ENCODE measurements at regions of chr11 and their contacts with region 1.

Region 1: DNA sequence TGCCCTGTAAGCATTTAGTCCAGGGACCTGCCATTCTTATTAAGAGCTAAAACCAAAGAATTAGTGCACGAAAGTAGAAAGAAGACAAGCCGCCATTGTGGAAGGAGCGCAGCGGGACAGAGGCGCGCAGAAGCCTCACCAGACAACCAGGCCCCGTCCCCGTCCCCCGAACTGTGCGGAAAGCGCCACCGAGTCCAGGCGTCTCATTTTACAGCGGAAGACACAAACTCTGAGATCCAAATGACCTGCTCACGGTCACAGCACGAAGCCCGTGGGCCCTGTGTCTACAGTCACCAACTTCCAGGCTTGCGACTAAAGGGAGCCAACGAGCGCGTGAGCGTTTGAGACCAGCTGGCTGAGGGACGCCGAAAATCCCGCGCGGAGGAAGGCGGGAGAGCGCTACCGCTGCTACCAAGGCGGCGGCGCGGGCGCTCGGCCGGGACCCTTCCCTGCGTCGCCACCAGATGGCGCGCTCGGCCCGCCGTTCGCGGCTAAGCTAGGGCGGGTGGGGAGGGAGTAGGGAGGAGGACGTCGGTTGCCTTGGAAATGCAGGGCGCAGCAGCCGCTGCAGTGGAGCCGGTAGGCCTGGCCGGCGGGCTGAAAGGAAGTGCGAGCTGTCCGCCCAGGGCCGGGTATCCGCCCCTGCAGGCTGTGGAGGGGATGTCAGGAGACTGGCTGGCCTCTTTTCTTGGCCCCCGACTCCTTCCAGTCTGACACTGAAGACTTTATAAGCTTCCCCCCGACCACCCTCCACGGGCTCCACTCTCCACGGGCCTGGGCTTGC is 434 bp upstream of the CCDC83 start:
- DNase-seq: peak; percentile 84 to 93 (median 88)
- H3K4me3 ChIP-seq: peak overlapping the region; percentile 81 to 95
- H3K4me3 Mint-ChIP-seq: peak overlapping the region; percentile 86 to 94 (median 91)
- H3K27ac ChIP-seq: peak overlapping the region; percentile 73
- H3K27ac Mint-ChIP-seq: peak overlapping the region; percentile 91 to 96 (median 94)
- H3K4me1 ChIP-seq: peaks cover 16% of the 10 kb centered on the region
- H3K4me1 Mint-ChIP-seq: peaks cover 6 to 16% (median 11%) of the 10 kb centered on the region in 4 donors
- H3K27me3 ChIP-seq: no peaks in the 10 kb centered on the region
- H3K27me3 Mint-ChIP-seq: peaks cover 0 to 2% of the 10 kb centered on the region in 2 donors

Region 2: GRCh38 chr11:85694386-85694980 is 160.3 kb before region 1 on chr11:
- CTCF ChIA-PET with region 1: interaction called, 29 read pairs
- POLR2A ChIA-PET with region 1: interaction called, 5 read pairs
- intact Hi-C with region 1: loop called (anchors 1 kb)
- DNase-seq: peak in 4 of 5 donors; percentile 40 to 57 (median 45)
- H3K4me3 ChIP-seq: no peak overlapping the region
- H3K4me3 Mint-ChIP-seq: no peak overlapping the region
- H3K27ac ChIP-seq: no peak overlapping the region
- H3K27ac Mint-ChIP-seq: peak overlapping the region in 2 of 7 donors; percentile 7 to 53
- H3K4me1 ChIP-seq: peaks cover 5% of the 10 kb centered on the region
- H3K4me1 Mint-ChIP-seq: peaks cover 8 to 12% (median 9%) of the 10 kb centered on the region in 4 donors
- H3K27me3 ChIP-seq: no peaks in the 10 kb centered on the region
- H3K27me3 Mint-ChIP-seq: peaks cover 0 to 2% of the 10 kb centered on the region in 2 donors

Region 3: GRCh38 chr11:85725510-85726258 is 129.1 kb before region 1 on chr11:
- CTCF ChIA-PET with region 1: no interaction called
- POLR2A ChIA-PET with region 1: no interaction called
- intact Hi-C with region 1: no loop called
- DNase-seq: no peak
- H3K4me3 ChIP-seq: no peak overlapping the region
- H3K4me3 Mint-ChIP-seq: no peak overlapping the region
- H3K27ac ChIP-seq: no peak overlapping the region
- H3K27ac Mint-ChIP-seq: peak overlapping the region in 2 of 7 donors; percentile 41 to 43
- H3K4me1 ChIP-seq: no peaks in the 10 kb centered on the region
- H3K4me1 Mint-ChIP-seq: peaks cover 0 to 15% (median 7%) of the 10 kb centered on the region in 4 donors
- H3K27me3 ChIP-seq: no peaks in the 10 kb centered on the region
- H3K27me3 Mint-ChIP-seq: no peaks in the 10 kb centered on the region

Region 4: DNA sequence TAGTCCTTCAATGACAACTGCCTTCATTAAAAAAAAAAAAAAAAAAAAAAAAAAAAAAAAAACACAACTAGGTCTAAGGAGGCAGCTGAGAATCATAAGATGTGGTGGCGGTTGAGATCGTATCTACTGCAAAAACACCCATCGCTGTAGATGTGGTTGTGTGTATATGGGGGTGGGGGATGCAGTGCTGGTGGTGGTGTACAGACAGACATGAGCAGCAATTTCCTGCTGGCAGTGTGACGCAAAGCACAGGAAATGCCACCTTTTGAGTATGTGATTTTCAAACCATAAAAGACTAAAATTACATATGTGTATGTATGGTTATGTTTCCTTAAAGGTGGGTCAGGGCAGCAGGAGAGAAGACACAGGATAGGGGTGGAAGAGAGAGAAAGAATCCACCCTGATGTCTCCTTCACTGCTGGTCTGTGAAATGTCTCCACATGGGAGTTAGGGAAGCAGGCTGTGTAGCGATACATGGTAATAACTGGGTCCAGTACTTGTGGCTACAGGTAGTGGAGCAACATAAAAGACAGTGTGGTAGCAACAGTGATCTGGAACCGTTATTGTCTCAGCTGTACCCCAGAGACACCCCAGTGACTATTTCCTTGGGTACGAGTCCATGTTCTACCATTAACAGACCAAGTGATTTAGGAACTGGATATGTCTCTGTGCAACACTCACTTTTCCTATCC is 101.7 kb before region 1 on chr11:
- CTCF ChIA-PET with region 1: interaction called, 4 read pairs
- POLR2A ChIA-PET with region 1: interaction called, 3 read pairs
- intact Hi-C with region 1: loop called (anchors 1 kb)
- DNase-seq: peak; percentile 97 to 98 (median 98)
- H3K4me3 ChIP-seq: peak overlapping the region; percentile 0 to 50
- H3K4me3 Mint-ChIP-seq: peak overlapping the region; percentile 73 to 93 (median 80)
- H3K27ac ChIP-seq: peak overlapping the region; percentile 60
- H3K27ac Mint-ChIP-seq: peak overlapping the region; percentile 97 to 99 (median 98)
- H3K4me1 ChIP-seq: peaks cover 88% of the 10 kb centered on the region
- H3K4me1 Mint-ChIP-seq: peaks cover 73 to 97% (median 86%) of the 10 kb centered on the region in 4 donors
- H3K27me3 ChIP-seq: no peaks in the 10 kb centered on the region
- H3K27me3 Mint-ChIP-seq: peaks cover 2 to 5% of the 10 kb centered on the region in 2 donors

Region 5: GRCh38 chr11:85826116-85826855 is 28.5 kb before region 1 on chr11:
- CTCF ChIA-PET with region 1: interaction called, 25 read pairs
- POLR2A ChIA-PET with region 1: interaction called, 15 read pairs
- intact Hi-C with region 1: loop called (anchors 1 kb)
- DNase-seq: peak in 2 of 5 donors; percentile 18 to 29
- H3K4me3 ChIP-seq: no peak overlapping the region
- H3K4me3 Mint-ChIP-seq: peak overlapping the region in 7 of 8 donors; percentile 4 to 76 (median 18)
- H3K27ac ChIP-seq: peak overlapping the region; percentile 6
- H3K27ac Mint-ChIP-seq: peak overlapping the region; percentile 82 to 99 (median 97)
- H3K4me1 ChIP-seq: peaks cover 74% of the 10 kb centered on the region
- H3K4me1 Mint-ChIP-seq: peaks cover 58 to 77% (median 63%) of the 10 kb centered on the region in 4 donors
- H3K27me3 ChIP-seq: no peaks in the 10 kb centered on the region
- H3K27me3 Mint-ChIP-seq: no peaks in the 10 kb centered on the region

Region 6: DNA sequence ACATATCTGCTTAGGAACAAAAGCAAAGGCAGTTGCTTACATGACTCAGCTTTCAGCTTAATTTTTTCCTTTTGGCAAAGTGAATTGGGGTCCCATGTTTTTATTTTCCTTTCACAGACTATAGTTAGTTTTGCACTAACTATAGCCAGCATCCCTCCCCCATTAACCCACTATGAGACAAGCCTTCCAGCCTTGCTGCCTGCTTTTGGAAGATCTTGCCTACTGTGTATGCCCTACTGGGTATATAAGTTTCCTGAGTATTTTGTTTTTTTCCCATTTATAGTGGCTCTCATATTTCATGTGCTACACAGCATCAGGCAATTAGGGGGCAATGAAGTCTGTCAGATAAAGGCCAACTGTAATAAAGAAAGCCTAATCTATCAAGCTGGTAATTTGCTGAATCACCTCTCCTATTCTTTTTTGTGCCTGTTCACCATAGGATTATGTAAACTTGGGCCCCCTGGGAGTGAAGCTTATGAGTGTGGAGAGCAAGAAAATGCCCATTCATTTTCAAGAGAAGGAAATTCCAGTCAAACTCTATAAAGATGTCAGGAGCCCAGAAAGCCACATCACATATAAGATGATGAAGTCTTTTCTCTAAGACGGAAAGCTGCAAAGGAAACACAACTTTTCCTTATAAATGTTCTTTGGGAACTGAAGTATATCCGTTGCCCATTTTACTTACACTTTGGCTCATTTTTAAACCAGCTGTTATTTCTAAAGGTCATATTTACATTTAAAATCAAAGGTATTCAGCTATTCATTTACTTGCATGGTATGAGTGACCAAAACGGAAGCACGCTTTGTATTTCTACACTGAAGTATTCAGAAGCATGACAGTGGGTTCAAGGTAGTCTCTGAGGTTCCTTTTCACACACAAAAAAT is 64.4 kb after region 1 on chr11:
- CTCF ChIA-PET with region 1: no interaction called
- POLR2A ChIA-PET with region 1: no interaction called
- intact Hi-C with region 1: no loop called
- DNase-seq: no peak
- H3K4me3 ChIP-seq: no peak overlapping the region
- H3K4me3 Mint-ChIP-seq: no peak overlapping the region
- H3K27ac ChIP-seq: no peak overlapping the region
- H3K27ac Mint-ChIP-seq: no peak overlapping the region
- H3K4me1 ChIP-seq: no peaks in the 10 kb centered on the region
- H3K4me1 Mint-ChIP-seq: no peaks in the 10 kb centered on the region
- H3K27me3 ChIP-seq: no peaks in the 10 kb centered on the region
- H3K27me3 Mint-ChIP-seq: peaks cover 6 to 16% of the 10 kb centered on the region in 2 donors

Region 7: DNA sequence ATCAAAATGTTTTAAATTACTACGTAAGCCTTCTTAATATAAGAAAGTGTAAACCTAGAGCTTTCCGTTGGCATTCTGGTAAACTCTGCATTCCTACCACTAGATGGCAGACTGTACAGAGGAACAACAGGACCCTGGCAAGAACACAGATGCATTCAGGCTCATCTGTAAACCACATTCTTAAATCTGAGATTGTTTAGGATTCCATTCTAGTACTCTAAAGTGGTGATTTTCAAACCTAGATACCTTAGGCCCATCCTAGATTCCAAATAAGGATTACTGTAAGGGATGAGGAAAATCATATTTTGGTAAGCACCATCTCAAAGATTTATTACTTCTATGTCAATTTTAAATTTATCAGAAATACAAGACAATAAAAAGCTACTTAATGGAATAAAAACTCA is 187.2 kb after region 1 on chr11:
- CTCF ChIA-PET with region 1: interaction called, 10 read pairs
- POLR2A ChIA-PET with region 1: interaction called, 3 read pairs
- intact Hi-C with region 1: loop called (anchors 1 kb)
- DNase-seq: peak; percentile 72 to 76 (median 74)
- H3K4me3 ChIP-seq: no peak overlapping the region
- H3K4me3 Mint-ChIP-seq: peak overlapping the region in 4 of 8 donors; percentile 0 to 35 (median 4)
- H3K27ac ChIP-seq: no peak overlapping the region
- H3K27ac Mint-ChIP-seq: peak overlapping the region; percentile 20 to 84 (median 64)
- H3K4me1 ChIP-seq: peaks cover 58% of the 10 kb centered on the region
- H3K4me1 Mint-ChIP-seq: peaks cover 49 to 73% (median 62%) of the 10 kb centered on the region in 4 donors
- H3K27me3 ChIP-seq: no peaks in the 10 kb centered on the region
- H3K27me3 Mint-ChIP-seq: no peaks in the 10 kb centered on the region

Region 8: DNA sequence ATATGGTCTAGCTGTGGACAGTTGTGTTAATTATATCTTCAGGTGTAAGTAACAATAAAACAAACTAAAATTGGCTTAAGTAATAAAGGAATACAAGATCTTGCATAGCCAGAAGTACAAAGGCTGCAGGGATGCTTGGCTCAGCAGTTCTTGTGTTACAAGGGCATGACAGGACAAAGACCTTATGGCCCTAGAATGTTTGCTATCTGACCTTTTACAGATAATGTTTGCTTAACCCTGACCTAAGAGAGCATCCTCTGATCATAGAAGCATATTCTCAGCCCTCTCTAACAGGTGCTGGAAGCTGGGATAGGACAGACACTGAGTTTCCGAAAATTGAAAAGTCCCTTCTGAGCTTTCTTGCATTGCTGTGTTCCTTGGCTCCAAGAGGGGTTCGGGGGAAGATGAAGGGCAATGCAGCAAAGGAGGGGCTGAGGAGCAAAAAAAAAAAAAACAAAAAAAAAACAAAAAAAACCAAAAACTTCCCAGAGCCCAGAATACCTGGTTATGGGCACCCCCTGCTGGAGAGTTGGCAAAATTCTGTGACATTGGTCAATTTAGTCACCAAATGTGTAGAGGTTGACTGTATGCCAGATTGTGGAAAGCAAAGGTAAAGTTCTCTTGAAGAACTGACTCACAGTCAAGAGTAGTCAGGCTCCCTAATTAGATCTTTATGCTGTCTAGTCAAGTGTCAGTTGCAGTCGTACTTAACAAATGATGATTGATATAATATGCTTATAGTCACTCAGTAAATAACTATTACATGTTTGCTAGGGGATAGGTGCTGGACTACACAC is 436.9 kb after region 1 on chr11:
- CTCF ChIA-PET with region 1: interaction called, 24 read pairs
- POLR2A ChIA-PET with region 1: interaction called, 3 read pairs
- intact Hi-C with region 1: loop called (anchors 1 kb)
- DNase-seq: peak; percentile 49 to 62 (median 55)
- H3K4me3 ChIP-seq: no peak overlapping the region
- H3K4me3 Mint-ChIP-seq: no peak overlapping the region
- H3K27ac ChIP-seq: no peak overlapping the region
- H3K27ac Mint-ChIP-seq: peak overlapping the region in 6 of 7 donors; percentile 1 to 78 (median 50)
- H3K4me1 ChIP-seq: peaks cover 60% of the 10 kb centered on the region
- H3K4me1 Mint-ChIP-seq: peaks cover 22 to 50% (median 34%) of the 10 kb centered on the region in 4 donors
- H3K27me3 ChIP-seq: no peaks in the 10 kb centered on the region
- H3K27me3 Mint-ChIP-seq: no peaks in the 10 kb centered on the region

Region 9: GRCh38 chr11:86314646-86315045 is 459.9 kb after region 1 on chr11:
- CTCF ChIA-PET with region 1: no interaction called
- POLR2A ChIA-PET with region 1: no interaction called
- intact Hi-C with region 1: no loop called
- DNase-seq: no peak
- H3K4me3 ChIP-seq: no peak overlapping the region
- H3K4me3 Mint-ChIP-seq: no peak overlapping the region
- H3K27ac ChIP-seq: no peak overlapping the region
- H3K27ac Mint-ChIP-seq: no peak overlapping the region
- H3K4me1 ChIP-seq: peaks cover 5% of the 10 kb centered on the region
- H3K4me1 Mint-ChIP-seq: peaks cover 17 to 29% (median 24%) of the 10 kb centered on the region in 4 donors
- H3K27me3 ChIP-seq: no peaks in the 10 kb centered on the region
- H3K27me3 Mint-ChIP-seq: no peaks in the 10 kb centered on the region

Measured in CD4-positive, alpha-beta memory T cell (primary cell).